A549 (cell line): ENCODE measurements at regions of chr12 and their contacts with region 1.

Region 1: GRCh38 chr12:112012775-112013600 is at the starts of genes ERP29 and TMEM116:
- DNase-seq: peak; percentile 100
- ATAC-seq: peak; percentile 86 to 88
- H3K4me3 ChIP-seq: peak within 1 kb of the TSS; percentile 86
- H3K27ac ChIP-seq: peak within 1 kb of the TSS; percentile 96
- H3K4me1 ChIP-seq: peaks cover 24% of the 10 kb centered on the region
- CTCF ChIP-seq: no peak
- EP300 ChIP-seq: no peak
- POLR2A ChIP-seq: peak; percentile 97
- RAD21 ChIP-seq: peak; percentile 16 to 17; a peak in 1 of 5 replicates
- polyA plus RNA-seq, gene ERP29: 87.3 and 115 TPM in 2 replicates
- polyA plus RNA-seq, gene TMEM116: 22.4 and 25.3 TPM in 2 replicates

Region 2: DNA sequence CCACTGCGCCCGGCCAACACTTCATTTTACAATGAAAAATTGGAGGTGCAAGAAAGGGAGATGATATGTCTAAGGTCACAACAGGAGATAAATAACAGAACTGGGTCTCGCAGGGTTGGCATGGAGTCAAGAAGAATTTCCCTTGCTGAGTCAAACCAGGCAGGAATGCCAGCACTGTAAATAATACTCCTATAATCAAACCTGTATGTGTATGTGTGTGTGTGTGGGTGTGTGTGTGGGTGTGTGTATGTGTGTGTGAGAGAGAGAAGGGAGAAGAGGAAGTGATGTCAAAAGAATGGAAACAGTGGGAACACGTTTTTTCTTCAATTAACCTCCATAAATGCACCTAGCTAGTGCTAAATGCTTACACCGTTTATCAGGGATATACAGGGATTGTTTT is 70.4 kb before region 1 on chr12:
- CTCF ChIA-PET with region 1: interaction called, 18 read pairs
- POLR2A ChIA-PET with region 1: interaction called, 6 read pairs
- DNase-seq: peak in 1 of 2 experiments; percentile 67
- ATAC-seq: peak in 1 of 2 experiments; percentile 46; a peak in 3 of 6 replicates
- H3K4me3 ChIP-seq: no peak overlapping the region
- H3K27ac ChIP-seq: no peak overlapping the region
- H3K4me1 ChIP-seq: peaks cover 8% of the 10 kb centered on the region; the same call in 2 of the 3 replicates
- CTCF ChIP-seq: no peak
- EP300 ChIP-seq: no peak
- POLR2A ChIP-seq: no peak
- RAD21 ChIP-seq: no peak

Region 3: DNA sequence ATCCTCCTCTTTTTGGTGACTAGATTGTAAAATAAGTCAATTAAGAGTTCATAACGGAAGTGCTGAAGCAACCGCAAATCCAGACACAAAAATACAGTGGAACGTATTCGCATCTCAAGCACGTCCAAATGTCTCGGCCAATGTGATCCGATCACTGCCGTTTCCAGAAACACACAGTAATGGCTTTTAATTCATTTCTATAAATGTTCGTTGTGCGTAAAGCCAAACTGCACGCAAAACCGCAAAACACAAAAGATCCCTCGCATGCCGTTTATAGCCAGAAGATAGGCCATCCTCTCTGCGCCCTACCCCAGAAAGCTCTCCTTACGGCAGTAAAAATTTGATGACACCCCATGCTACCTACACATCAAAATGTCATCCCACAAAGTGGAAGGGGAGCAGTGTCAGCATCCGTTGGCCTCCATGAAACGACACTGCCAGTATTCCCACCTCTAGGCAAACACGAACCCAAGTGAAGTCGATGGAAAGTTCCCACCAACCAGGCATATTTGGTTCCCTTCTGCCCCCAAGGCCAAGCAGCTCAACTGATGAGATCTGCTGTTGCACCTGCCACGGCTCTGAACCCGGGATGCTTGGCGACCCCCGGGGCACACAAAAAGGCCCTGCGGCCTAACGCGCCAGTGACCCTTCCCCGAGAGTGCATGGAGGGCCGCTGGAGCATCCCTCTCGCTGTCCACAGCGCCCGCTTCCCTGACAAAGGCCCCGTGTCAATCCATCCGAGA is 367.8 kb after region 1 on chr12:
- CTCF ChIA-PET with region 1: no interaction called
- POLR2A ChIA-PET with region 1: no interaction called
- DNase-seq: no peak
- ATAC-seq: no peak
- H3K4me3 ChIP-seq: peak overlapping the region; percentile 100
- H3K27ac ChIP-seq: peak overlapping the region; percentile 84 to 94
- H3K4me1 ChIP-seq: peaks cover 5% of the 10 kb centered on the region; the same call in 2 of the 3 replicates
- CTCF ChIP-seq: no peak
- EP300 ChIP-seq: no peak
- POLR2A ChIP-seq: no peak
- RAD21 ChIP-seq: no peak